HAP-1 (cell line): ENCODE measurements at regions of chr9 and their contacts with region 1.

Region 1: GRCh38 chr9:120441408-120442307 is 138.3 kb downstream of the CDK5RAP2 start:
- DNase-seq: no peak
- H3K4me3 ChIP-seq: no peak overlapping the region
- H3K4me1 ChIP-seq: no peaks in the 10 kb centered on the region
- H3K27me3 ChIP-seq: no peaks in the 10 kb centered on the region

Region 2: GRCh38 chr9:120505186-120505585 is 63.5 kb after region 1 on chr9:
- in situ Hi-C with region 1: loop called (anchors 10 kb)
- DNase-seq: no peak
- H3K4me3 ChIP-seq: no peak overlapping the region
- H3K4me1 ChIP-seq: no peaks in the 10 kb centered on the region
- H3K27me3 ChIP-seq: no peaks in the 10 kb centered on the region

Region 3: DNA sequence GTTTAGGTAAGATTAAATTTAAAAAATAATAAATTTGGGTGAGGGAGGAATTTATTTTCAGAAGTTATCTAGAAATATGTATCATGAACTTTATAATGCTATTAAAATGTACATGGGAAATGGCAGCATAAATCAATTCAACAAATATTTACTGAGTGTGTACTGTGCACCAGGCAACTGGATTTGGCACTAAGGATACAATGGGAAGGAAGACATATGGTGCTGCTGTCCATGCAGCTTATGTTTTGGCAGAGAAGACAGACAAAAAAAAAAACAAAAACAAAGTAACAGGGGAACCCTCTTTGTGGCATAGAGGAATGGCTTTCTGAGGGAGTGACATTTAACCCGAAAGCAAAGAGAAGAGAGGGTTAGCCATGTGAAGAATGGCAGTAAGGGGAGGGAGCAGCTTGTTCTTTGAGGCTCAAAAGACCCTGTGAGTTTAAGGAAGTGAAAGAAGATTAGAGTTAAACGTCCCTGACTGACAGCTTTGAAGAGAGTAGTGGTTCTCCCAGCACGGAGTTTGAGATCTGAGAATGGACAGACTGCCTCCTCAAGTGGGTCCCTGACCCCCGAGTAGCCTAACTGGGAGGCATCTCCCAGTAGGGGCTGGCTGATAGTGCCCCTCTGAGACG is 657.0 kb after region 1 on chr9:
- in situ Hi-C with region 1: no loop called
- DNase-seq: no peak
- H3K4me3 ChIP-seq: no peak overlapping the region
- H3K4me1 ChIP-seq: no peaks in the 10 kb centered on the region
- H3K27me3 ChIP-seq: no peaks in the 10 kb centered on the region